AG04449 (cell line): ENCODE measurements at regions of chr3 and their contacts with region 1.

Region 1: GRCh38 chr3:189961525-189962161 is 159.1 kb downstream of the P3H2 start:
- DNase-seq: no peak
- H3K4me3 ChIP-seq: no peak overlapping the region
- CTCF ChIP-seq: peak; percentile 82

Region 2: DNA sequence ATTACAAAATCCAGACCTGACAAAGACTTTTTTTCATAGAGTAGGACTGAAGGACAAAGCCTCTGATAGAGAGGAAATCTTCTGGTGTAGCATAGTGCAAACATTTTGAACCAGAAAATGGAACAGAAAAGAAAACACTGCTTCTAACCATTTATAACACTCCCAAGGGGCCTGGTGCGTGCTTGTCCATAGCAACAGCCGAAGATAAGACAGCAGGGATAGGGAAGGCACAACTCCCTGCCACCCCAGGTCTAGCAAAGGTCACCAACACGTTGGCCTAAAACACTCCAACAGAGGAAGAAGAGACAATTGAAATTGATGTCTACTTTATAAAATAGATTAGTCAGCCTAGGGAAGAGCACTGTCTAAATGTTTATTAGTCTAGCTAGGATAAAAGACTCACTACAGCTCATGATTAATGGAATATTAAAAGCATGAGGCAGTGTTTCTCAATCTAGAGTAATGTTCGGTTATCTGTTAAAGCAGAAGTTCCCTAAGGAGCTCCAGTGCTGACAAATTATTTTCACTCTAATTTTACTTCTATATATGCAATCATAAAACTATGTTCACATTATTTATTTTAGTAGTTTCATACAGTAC is 13.8 kb after region 1 on chr3:
- CTCF ChIA-PET with region 1: interaction called, 62 read pairs
- POLR2A ChIA-PET with region 1: no interaction called
- DNase-seq: no peak
- H3K4me3 ChIP-seq: no peak overlapping the region
- CTCF ChIP-seq: no peak

Region 3: GRCh38 chr3:190120269-190121060 is 158.8 kb after region 1 on chr3 and contains the start of gene P3H2:
- CTCF ChIA-PET with region 1: interaction called, 13 read pairs
- POLR2A ChIA-PET with region 1: no interaction called
- DNase-seq: no peak
- H3K4me3 ChIP-seq: peak within 1 kb of the TSS; percentile 78
- CTCF ChIP-seq: peak; percentile 77

Region 4: DNA sequence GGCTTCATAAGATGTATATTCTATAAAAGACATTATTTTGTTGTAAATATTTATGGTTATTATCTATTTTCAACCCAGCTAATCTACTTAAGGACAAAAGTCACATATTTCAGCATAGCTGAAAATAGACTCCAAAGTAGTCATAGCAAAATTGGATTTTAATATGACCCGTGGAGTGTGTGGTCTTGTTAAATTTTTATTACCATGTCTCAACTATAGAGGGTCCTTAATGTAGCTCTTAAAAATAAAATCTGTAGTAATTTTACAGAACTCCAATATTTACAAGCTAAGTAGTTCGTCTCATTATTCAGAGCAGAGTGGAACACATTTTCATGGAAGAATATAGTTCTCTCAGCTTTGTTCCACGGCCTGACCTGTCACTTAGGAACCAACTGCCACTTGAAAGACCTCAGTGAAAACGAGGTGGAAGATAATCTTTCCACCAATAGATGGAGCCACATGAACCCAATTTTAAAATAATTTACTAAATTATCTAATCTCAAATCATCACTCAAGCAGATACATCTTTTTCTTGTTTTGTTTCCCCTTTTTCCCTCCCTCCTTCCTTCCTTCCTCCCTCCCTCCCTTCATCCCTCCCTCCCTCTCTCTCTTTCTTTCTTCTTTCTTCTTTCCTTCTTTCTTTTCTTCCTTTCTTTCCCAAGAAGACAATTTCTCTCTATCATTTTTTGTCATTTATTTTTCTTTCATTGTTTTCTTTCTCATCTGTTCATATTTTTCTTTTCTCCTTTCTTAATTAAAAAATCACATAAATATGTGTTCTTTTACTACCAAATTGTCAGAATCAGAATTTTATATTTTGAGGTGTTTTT is 263.4 kb after region 1 on chr3:
- CTCF ChIA-PET with region 1: interaction called, 36 read pairs
- POLR2A ChIA-PET with region 1: no interaction called
- DNase-seq: no peak
- H3K4me3 ChIP-seq: no peak overlapping the region
- CTCF ChIP-seq: peak; percentile 12

Region 5: GRCh38 chr3:190424478-190425439 is 463.1 kb after region 1 on chr3:
- CTCF ChIA-PET with region 1: interaction called, 82 read pairs
- POLR2A ChIA-PET with region 1: no interaction called
- DNase-seq: no peak
- H3K4me3 ChIP-seq: no peak overlapping the region
- CTCF ChIP-seq: peak; percentile 54